Head of caudate nucleus (tissue), 42 donors: ENCODE measurements at regions of chr12 and their contacts with region 1.

Region 1: GRCh38 chr12:30847259-30847658 is 79.3 kb upstream of the TSPAN11 start:
- DNase-seq: peak in 3 of 42 donors; percentile 11 to 23 (median 12)

Region 2: GRCh38 chr12:30985814-30986452 is 138.7 kb after region 1 on chr12:
- intact Hi-C with region 1: loop called (anchors 5 kb)
- DNase-seq: peak; percentile 46 to 89 (median 78)

Region 3: DNA sequence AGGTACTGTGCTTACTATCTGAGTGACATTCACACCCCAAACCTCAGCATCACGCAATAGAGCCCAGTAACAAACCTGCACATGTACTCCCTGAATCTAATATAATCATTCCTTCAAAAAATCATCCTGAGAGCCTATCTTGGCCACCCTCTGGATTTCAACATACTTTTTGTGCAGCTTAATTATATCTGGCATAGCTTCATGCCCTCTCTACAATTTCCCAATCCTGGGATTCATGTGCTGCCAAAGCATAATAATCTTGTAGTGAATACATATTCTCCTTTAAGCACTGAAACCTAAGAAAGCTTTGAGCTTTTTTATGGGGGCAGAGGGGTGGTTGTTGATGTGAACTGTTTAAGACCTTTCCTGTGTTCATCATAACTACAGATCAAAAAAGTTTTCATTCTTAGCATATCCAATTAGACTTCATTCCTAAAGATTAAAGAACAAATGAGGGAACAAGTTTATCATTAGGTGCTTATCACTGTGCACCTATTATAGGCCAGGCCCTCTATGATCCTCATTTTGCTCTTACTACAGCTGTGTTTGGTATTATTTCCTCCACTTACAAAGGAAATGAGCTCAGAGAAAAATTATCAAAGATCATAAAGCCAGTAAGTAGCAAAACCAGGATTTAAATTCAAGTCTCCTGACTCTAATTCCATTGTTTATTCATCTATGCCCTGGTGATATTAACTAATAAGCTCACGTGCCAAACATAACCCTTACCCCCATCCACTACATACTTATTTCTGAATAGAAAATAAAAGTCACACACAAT is 427.5 kb after region 1 on chr12:
- intact Hi-C with region 1: loop called (anchors 10 kb)
- DNase-seq: no peak

Region 4: GRCh38 chr12:31574803-31575575 is 727.7 kb after region 1 on chr12:
- intact Hi-C with region 1: no loop called
- DNase-seq: no peak